H1 (cell line): ENCODE measurements at regions of chr10 and their contacts with region 1.

Region 1: DNA sequence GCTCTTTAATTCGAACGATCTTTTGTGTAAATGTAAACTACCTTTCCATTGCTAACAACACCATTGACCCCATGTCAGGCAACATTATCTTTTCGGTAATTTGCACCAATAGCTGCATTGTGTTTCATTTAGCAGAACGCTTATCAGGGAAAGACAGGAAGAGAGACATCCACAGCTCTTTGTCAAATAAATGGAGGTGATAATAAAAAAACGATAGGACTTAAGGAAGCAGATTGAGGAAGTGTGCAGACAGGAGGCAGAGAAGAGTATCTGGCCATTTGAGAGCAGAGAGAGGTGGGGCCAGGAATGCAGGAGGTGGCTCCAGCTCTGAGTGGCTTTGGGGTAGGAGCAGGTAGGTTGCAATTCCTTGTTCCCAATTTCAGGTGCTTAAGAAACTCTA is 37.5 kb upstream of the ADARB2 start:
- DNase-seq: no peak
- H3K4me3 ChIP-seq: no peak overlapping the region
- H3K27ac ChIP-seq: no peak overlapping the region
- H3K4me1 ChIP-seq: peaks cover 0 to 6% (median 1%) of the 10 kb centered on the region in 4 experiments; a peak in 3 of 7 replicates
- H3K27me3 ChIP-seq: peaks cover 0 to 3% (median 0%) of the 10 kb centered on the region in 4 experiments; a peak in 3 of 7 replicates
- CTCF ChIP-seq: no peak
- EP300 ChIP-seq: no peak
- POLR2A ChIP-seq: no peak
- RAD21 ChIP-seq: no peak

Region 2: DNA sequence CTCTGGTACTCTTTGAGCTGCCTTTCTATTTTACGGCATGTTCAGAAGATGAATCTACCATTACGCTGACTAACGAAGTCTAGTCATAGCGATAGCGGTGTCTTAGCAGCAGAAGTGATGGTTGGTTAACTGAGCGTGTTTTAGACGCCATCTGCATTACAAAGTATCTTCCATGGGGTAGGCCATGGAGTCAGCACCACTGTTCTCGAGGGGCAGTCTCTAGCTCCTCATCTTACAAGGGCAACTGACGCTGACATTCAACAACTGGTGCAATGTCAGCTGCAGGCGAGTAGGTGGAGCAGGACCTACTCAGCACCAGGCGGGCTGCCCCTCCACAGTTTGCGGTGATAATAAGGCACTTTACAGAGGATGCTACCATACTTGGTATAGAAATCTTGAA is 126.1 kb before region 1 on chr10:
- CTCF ChIA-PET with region 1: no interaction called
- POLR2A ChIA-PET with region 1: no interaction called
- DNase-seq: no peak
- H3K4me3 ChIP-seq: no peak overlapping the region
- H3K27ac ChIP-seq: no peak overlapping the region
- H3K4me1 ChIP-seq: no peaks in the 10 kb centered on the region
- H3K27me3 ChIP-seq: no peaks in the 10 kb centered on the region
- CTCF ChIP-seq: no peak
- EP300 ChIP-seq: no peak
- POLR2A ChIP-seq: no peak
- RAD21 ChIP-seq: no peak

Region 3: DNA sequence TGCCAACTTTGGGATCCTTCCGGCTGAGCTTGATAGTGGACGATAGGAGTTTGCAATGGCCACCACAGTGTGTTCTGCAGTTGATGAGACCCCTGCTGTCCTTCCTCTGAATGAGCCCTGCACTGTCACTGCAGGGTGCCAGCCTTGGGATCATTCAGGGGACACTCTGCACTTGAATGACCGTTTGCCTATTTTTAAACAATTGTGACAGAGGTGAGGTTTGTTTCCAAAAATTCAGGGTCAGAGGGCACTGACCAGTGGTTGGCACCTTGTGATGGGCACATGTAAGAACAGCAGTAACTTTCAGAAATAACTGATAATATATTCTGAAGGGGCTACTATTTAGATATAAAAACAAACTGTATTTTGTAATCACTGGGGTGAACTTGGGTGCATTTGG is 11.0 kb after region 1 on chr10:
- CTCF ChIA-PET with region 1: interaction called, 12 read pairs
- POLR2A ChIA-PET with region 1: no interaction called
- DNase-seq: no peak
- H3K4me3 ChIP-seq: no peak overlapping the region
- H3K27ac ChIP-seq: no peak overlapping the region
- H3K4me1 ChIP-seq: peaks cover 0 to 6% (median 2%) of the 10 kb centered on the region in 4 experiments; a peak in 3 of 7 replicates
- H3K27me3 ChIP-seq: no peaks in the 10 kb centered on the region; a peak in 1 of 7 replicates
- CTCF ChIP-seq: no peak
- EP300 ChIP-seq: no peak
- POLR2A ChIP-seq: no peak
- RAD21 ChIP-seq: no peak

Region 4: DNA sequence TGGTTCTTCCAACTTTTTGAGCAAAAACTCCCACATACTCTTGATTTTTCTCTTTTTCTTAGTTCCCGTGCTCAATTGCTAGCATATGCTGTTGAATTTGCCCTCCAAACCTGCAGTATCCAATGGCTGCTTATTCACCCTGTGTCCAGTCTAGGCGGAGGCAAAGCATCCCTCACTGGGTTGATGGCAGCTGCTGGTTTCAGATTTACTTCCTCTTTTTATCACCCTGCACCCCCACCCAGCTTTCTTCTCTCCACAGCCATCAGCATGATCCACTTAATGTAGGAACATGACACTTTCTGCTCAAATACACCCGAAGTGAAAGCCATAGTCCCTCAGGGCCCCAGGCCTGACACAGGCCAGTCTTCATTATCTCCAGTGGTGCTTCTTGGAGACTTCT is 50.1 kb after region 1 on chr10:
- CTCF ChIA-PET with region 1: no interaction called
- POLR2A ChIA-PET with region 1: no interaction called
- DNase-seq: no peak
- H3K4me3 ChIP-seq: no peak overlapping the region
- H3K27ac ChIP-seq: no peak overlapping the region
- H3K4me1 ChIP-seq: no peaks in the 10 kb centered on the region
- H3K27me3 ChIP-seq: no peaks in the 10 kb centered on the region; a peak in 1 of 7 replicates
- CTCF ChIP-seq: no peak
- EP300 ChIP-seq: no peak
- POLR2A ChIP-seq: no peak
- RAD21 ChIP-seq: no peak

Region 5: DNA sequence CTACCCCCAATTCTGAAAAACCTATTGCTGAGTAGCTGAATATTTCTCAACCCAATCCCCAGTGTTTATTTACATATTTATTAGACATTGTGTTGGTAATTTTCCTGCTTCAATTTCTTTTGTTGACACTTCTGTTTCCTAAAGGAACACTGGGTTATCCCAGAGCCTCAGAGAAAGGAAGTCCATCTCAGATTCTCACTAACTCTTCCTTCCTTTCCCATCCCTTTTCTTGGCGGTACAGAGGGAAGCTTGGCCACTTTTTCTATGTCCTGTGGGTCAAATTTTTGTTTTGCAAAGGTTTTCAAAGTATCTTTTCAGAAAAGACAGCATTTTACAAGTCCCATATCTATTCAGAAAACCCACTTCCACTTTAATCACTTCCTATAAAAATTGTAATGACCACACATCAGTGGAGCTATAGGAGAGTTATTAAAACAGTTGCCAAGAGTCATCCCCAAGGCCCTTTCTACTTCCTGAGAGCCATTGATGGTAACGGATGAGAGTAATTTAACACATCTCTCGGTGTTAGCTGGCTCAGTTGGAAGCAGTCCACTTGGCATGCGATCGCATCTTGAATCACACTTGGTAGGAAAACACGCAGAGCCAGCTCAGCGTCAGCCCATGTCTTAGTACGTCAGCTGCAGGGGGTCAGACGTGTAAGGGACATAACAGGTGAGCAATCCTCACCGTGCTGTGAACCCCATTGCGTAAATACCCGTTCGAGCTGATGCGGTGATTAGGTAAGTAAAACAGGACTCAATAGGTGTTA is 193.6 kb after region 1 on chr10:
- CTCF ChIA-PET with region 1: no interaction called
- POLR2A ChIA-PET with region 1: no interaction called
- DNase-seq: no peak
- H3K4me3 ChIP-seq: no peak overlapping the region
- H3K27ac ChIP-seq: no peak overlapping the region
- H3K4me1 ChIP-seq: no peaks in the 10 kb centered on the region; a peak in 1 of 7 replicates
- H3K27me3 ChIP-seq: no peaks in the 10 kb centered on the region
- CTCF ChIP-seq: no peak
- EP300 ChIP-seq: no peak
- POLR2A ChIP-seq: no peak
- RAD21 ChIP-seq: no peak